ENCODE measurements at regions of chr16 and their contacts with region 1.

Region 1: GRCh38 chr16:58574895-58575294 is 54.7 kb downstream of the CNOT1 start:
- H3K4me3 Mint-ChIP-seq: no peak overlapping the region
- H3K27ac Mint-ChIP-seq: no peak overlapping the region
- H3K4me1 Mint-ChIP-seq: no peaks in the 10 kb centered on the region
- H3K27me3 Mint-ChIP-seq: no peaks in the 10 kb centered on the region

Region 2: DNA sequence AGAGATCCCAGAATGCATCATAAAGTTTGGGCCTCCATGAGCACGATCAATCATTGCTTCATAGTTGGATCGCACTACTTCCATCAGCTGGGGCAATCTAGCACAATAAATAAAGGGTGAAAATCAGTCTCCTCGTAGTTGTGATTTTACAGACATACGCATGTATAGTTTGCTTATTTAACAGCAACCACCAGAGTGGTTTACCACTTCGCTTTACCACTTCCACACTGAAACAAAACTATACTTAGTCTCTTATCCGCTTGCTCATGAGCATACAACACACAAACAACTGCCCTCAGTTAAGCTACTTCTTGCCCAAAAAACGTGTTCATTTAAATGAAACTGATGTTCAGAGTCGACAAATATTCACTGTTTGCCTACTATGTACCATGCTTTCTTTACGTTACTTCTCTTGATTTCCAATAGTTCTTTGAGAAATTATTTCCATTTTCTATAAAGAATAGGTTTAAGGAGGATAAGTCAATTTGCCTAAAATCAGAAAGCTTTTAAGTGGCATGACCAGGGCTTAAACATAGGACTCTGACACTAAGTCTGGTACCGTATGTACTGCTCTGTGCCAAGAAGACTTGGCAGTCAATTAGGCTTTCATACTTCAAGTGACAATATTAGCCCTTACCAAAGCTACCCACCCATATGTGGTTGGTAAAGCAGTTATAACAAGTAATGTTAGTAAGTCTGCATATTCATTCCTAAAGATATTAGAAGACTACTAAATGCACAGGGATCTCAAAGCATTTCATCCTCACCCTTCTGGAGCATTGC is 37.6 kb before region 1 on chr16:
- intact Hi-C with region 1: loop called (anchors 5 kb)
- H3K4me3 Mint-ChIP-seq: no peak overlapping the region
- H3K27ac Mint-ChIP-seq: no peak overlapping the region
- H3K4me1 Mint-ChIP-seq: no peaks in the 10 kb centered on the region
- H3K27me3 Mint-ChIP-seq: no peaks in the 10 kb centered on the region

Region 3: GRCh38 chr16:58661199-58661830 is 86.4 kb after region 1 on chr16:
- intact Hi-C with region 1: no loop called
- H3K4me3 Mint-ChIP-seq: no peak overlapping the region
- H3K27ac Mint-ChIP-seq: no peak overlapping the region
- H3K4me1 Mint-ChIP-seq: peaks cover 10% of the 10 kb centered on the region
- H3K27me3 Mint-ChIP-seq: no peaks in the 10 kb centered on the region

Measured in dendritic cell treated with granulocyte-macrophage colony-stimulating factor and Interleukin-4, amounts not matched to agents 40 ng/mL and 50 ng/mL, for 4 days (primary cell).